ENCODE measurements at regions of chr5 and their contacts with region 1.

Region 1: GRCh38 chr5:172188033-172188892 is at the start of gene STK10:
- DNase-seq: peak; percentile 97
- H3K4me3 Mint-ChIP-seq: peak within 1 kb of the TSS; percentile 99
- H3K27ac Mint-ChIP-seq: peak within 1 kb of the TSS; percentile 99
- H3K4me1 Mint-ChIP-seq: peaks cover 38% of the 10 kb centered on the region
- H3K27me3 Mint-ChIP-seq: peaks cover 7% of the 10 kb centered on the region
- total RNA-seq, gene STK10: 87.9 and 91.1 TPM in 2 replicates

Region 2: GRCh38 chr5:171387345-171387969 is 800.8 kb before region 1 on chr5 and contains the start of gene NPM1:
- intact Hi-C with region 1: loop called (anchors 5 kb)
- DNase-seq: peak; percentile 99
- H3K4me3 Mint-ChIP-seq: peak within 1 kb of the TSS; percentile 94
- H3K27ac Mint-ChIP-seq: peak within 1 kb of the TSS; percentile 100
- H3K4me1 Mint-ChIP-seq: peaks cover 41% of the 10 kb centered on the region
- H3K27me3 Mint-ChIP-seq: peaks cover 10% of the 10 kb centered on the region
- total RNA-seq, gene NPM1: 3,066 and 3,162 TPM in 2 replicates

Region 3: DNA sequence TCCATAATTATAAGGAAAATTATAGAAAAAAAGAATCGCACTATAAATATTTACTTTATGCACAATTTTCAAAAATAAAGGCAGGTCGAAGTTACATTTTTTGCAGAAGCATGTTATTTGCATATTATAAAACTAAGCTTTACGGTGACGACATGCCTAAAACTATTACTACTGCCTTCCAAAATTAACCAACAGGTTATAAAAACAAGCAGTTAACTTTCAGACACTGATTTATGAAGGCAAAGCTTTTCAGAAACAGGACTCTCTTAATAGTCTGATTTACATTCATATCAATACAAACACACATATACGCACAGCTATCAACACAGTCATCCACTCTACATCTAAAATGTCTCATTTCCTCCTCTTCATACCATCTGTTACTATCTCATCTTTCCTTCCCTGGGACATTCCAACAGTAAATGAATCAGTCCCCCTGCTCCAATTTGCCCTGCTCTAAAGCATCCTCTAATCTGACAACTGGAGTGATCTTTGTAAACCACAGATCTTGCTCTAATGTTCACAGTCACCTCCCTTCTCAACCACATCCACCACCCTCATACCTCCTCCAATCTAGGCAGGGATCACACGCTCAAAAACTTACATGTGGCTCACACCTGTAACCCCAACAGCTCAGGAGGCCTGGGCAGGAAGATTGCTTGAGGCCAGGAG is 203.4 kb before region 1 on chr5:
- intact Hi-C with region 1: loop called (anchors 5 kb)
- DNase-seq: peak; percentile 79
- H3K4me3 Mint-ChIP-seq: no peak overlapping the region
- H3K27ac Mint-ChIP-seq: peak overlapping the region; percentile 30
- H3K4me1 Mint-ChIP-seq: peaks cover 34% of the 10 kb centered on the region
- H3K27me3 Mint-ChIP-seq: no peaks in the 10 kb centered on the region

Region 4: GRCh38 chr5:172065501-172065990 is 122.7 kb before region 1 on chr5:
- intact Hi-C with region 1: loop called (anchors 2 kb)
- DNase-seq: no peak
- H3K4me3 Mint-ChIP-seq: no peak overlapping the region
- H3K27ac Mint-ChIP-seq: no peak overlapping the region
- H3K4me1 Mint-ChIP-seq: peaks cover 42% of the 10 kb centered on the region
- H3K27me3 Mint-ChIP-seq: no peaks in the 10 kb centered on the region

Region 5: DNA sequence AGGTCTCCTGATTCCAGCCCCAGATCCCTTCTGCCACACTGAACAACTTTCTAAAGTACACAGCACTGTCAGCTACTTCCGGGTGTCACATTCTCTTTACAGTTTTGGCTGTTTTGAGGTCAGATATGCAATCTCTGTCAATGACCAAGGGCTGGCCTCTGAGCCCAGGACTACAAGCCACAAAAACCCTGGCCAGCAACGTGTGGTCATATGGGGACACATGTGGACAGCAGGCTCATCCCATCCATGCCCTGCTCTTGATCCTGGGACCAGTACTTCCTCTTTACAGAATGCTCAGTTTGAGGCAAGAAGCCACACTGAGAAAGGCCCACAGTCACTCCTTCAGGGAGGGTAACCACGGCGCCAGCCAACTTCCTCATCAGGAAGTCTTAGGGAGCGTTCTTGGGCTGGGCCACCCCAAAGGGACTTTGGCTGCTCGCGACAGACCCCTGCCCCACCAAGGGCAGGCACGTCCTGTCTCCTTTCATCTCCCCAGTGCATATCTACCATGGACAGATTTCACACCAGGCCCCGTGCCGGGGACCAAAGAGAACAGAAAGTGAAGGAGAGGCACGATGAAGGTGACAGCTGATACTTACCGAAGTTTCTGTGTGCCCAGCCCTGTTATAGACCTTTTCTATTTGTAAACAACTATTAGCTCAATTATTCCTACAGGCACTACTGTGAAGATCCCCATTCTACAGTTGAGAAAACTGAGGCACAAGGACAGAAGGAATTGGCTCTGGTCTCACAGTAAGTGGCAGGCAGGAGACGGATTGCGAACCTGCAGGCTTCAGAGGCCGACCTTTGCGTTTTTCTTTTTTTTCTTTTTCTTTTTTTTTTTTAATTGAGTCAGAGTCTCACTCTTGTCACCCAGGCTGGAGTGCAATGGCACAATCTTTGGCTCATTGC is 37.5 kb before region 1 on chr5:
- intact Hi-C with region 1: loop called (anchors 5 kb)
- DNase-seq: peak; percentile 75
- H3K4me3 Mint-ChIP-seq: peak overlapping the region; percentile 75
- H3K27ac Mint-ChIP-seq: peak overlapping the region; percentile 88
- H3K4me1 Mint-ChIP-seq: peaks cover 44% of the 10 kb centered on the region
- H3K27me3 Mint-ChIP-seq: no peaks in the 10 kb centered on the region

Region 6: DNA sequence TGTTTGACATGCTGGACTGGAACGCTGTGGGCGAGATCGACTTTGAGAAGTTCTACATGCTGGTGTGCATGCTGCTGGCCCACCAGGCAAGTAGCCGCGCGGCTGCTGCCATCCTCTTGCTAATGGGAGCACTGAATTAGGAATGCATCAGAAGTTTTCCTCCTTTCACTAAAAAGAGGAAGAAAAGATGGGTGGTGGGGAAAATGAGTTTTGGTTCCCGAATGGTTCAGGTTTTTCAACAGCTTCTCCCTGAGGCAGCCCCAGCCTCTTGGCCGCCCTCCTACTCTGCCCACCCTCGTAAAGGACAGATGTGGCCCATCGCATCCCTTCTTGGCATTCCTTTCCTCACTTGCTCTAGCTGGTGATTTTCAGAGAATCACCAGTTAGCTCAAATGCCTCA is 11.2 kb after region 1 on chr5:
- intact Hi-C with region 1: no loop called
- DNase-seq: no peak
- H3K4me3 Mint-ChIP-seq: no peak overlapping the region
- H3K27ac Mint-ChIP-seq: no peak overlapping the region
- H3K4me1 Mint-ChIP-seq: no peaks in the 10 kb centered on the region
- H3K27me3 Mint-ChIP-seq: peaks cover 11% of the 10 kb centered on the region

Region 7: GRCh38 chr5:172274921-172275753 is 86.9 kb after region 1 on chr5:
- intact Hi-C with region 1: loop called (anchors 2 kb)
- DNase-seq: peak; percentile 72
- H3K4me3 Mint-ChIP-seq: peak overlapping the region; percentile 4
- H3K27ac Mint-ChIP-seq: peak overlapping the region; percentile 63
- H3K4me1 Mint-ChIP-seq: peaks cover 20% of the 10 kb centered on the region
- H3K27me3 Mint-ChIP-seq: no peaks in the 10 kb centered on the region

Region 8: DNA sequence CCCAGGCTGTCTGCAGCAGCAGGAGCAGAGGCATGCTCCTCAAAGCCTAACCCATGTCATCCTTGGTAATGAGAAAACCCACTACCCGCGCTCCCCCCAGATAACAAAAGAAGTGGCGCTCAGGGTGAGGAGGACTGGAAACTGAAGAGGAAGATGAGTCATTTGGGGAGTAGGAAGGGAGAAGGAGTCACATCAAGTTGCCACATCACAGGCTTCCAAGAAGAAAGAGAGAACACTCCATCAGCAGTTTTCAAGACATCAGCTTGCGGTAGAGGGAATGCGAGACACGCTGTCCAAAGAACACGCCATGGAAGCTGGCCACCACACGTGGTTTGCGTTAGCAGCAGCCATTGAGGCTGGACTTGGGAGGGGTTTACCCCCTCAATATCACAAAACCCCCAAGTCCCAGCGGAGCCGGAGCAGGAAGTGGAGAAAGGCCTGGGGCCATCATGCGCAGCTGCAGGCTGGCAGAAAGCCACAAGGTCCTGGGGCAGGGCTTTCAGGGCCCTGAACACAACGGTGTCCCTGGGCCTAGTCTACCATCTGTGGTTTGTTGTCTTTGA is 224.5 kb after region 1 on chr5:
- intact Hi-C with region 1: loop called (anchors 5 kb)
- DNase-seq: peak; percentile 65
- H3K4me3 Mint-ChIP-seq: peak overlapping the region; percentile 63
- H3K27ac Mint-ChIP-seq: peak overlapping the region; percentile 80
- H3K4me1 Mint-ChIP-seq: peaks cover 29% of the 10 kb centered on the region
- H3K27me3 Mint-ChIP-seq: peaks cover 8% of the 10 kb centered on the region